ENCODE measurements at regions of chr3 and their contacts with region 1.

Region 1: GRCh38 chr3:15205934-15206661 is at the start of gene CAPN7:
- DNase-seq: peak; percentile 87 to 97 (median 93)
- H3K4me3 ChIP-seq: peak within 1 kb of the TSS; percentile 71 to 100 (median 95)
- H3K27ac ChIP-seq: peak within 1 kb of the TSS; percentile 61 to 97 (median 91)
- H3K27me3 ChIP-seq: no peaks in the 10 kb centered on the region
- CTCF ChIP-seq: peak in 47 of 56 donors; percentile 10 to 61 (median 42)
- total RNA-seq, gene CAPN7: 33.3 to 71.8 (median 46.0) TPM

Region 2: DNA sequence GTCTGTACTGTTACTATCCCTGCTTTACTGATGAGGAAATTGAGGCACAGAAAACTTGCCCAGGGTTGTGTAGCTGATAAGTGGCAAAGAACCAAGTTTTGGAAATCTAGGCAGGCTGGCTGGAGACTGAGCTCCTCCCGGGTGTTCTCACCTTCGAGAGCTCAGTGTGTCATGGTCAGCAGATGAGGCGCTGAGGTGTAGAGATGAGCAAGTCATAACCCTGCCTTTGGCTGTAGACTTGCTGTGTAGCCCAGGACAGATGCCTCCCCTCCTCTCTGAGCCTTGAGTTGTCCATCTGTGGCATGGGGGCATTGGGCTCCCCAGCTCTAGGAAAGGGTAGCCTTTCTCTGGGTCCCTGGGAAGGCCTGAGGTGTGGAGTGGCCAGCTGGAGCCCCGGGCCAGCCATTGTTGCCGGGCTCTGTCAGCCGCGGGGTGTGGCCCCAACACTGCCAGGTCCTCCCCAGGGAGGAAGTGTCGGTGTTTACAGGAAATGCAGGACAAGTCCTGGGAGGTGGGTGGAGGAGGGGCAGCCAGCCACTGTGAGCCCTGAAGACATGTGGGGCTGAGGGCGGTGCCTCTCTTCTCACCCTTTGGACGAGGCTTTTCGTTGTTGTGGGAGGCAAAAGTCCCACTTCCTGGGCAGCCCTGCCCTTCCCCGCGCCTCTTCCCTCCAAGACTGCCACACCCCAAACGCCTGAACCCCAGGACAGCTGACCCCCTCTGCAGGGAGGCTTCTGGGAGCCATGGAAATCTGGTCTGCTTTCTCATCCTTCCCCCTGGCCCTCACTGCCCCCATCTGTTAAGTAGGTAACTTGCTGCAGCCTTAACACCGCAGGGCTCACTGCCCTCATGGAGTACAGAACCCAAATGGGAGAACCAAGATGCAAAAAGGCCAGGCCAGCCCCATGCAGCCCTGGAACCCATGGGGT is 358.2 kb before region 1 on chr3:
- intact Hi-C with region 1: no loop called
- DNase-seq: no peak
- H3K4me3 ChIP-seq: no peak overlapping the region
- H3K27ac ChIP-seq: peak overlapping the region in 1 of 59 donors; percentile 5
- H3K27me3 ChIP-seq: peaks cover 0 to 25% (median 0%) of the 10 kb centered on the region in 45 donors
- CTCF ChIP-seq: no peak

Region 3: GRCh38 chr3:15098503-15099363 is 107.4 kb before region 1 on chr3 and contains the start of gene RBSN:
- intact Hi-C with region 1: loop called in 1 of 2 experiments (anchors 5 kb)
- DNase-seq: peak; percentile 92 to 97 (median 96)
- H3K4me3 ChIP-seq: peak within 1 kb of the TSS; percentile 70 to 99 (median 90)
- H3K27ac ChIP-seq: peak within 1 kb of the TSS in 57 of 59 donors; percentile 27 to 95 (median 87)
- H3K27me3 ChIP-seq: no peaks in the 10 kb centered on the region
- CTCF ChIP-seq: peak in 27 of 56 donors; percentile 11 to 52 (median 32)
- total RNA-seq, gene RBSN: 39.4 to 74.3 (median 61.4) TPM

Region 4: DNA sequence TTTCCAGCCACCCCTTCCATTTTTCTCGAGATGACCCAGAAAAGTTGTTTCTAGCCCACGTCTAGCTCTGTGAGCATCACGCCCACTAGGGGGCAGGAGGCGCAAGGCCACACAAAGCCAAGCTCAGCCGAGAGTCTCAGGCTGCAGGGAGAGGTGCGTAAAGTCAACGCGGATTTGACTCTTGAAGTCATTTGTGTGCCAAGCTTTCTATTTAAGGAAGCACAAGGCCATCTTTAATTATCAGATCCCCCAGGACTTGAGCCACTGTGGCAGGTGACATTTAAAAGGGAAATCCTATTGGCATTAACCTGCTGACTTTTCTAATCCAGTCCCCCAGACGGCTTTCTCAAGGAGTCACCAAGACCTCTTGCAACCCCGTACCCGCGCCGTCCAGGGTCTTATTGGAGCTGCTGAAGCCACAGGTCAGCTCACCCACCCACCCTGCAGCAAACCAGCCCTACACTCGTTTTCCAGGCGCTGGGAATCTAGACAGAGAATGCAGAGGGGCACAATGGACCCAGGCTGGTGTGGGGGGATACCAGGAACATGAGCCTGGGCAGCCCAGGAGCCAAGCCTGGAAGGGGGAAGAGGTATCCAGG is 62.0 kb after region 1 on chr3:
- intact Hi-C with region 1: loop called (anchors 2 to 10 kb)
- DNase-seq: peak; percentile 79 to 91 (median 88)
- H3K4me3 ChIP-seq: peak overlapping the region in 6 of 59 donors; percentile 6 to 31 (median 18)
- H3K27ac ChIP-seq: peak overlapping the region in 54 of 59 donors; percentile 1 to 98 (median 93)
- H3K27me3 ChIP-seq: no peaks in the 10 kb centered on the region
- CTCF ChIP-seq: peak; percentile 81 to 98 (median 95)

Region 5: GRCh38 chr3:15377961-15378791 is 172.1 kb after region 1 on chr3:
- intact Hi-C with region 1: loop called in 1 of 2 experiments (anchors 2 kb)
- DNase-seq: peak; percentile 91 to 99 (median 95)
- H3K4me3 ChIP-seq: peak overlapping the region in 41 of 59 donors; percentile 1 to 50 (median 32)
- H3K27ac ChIP-seq: peak overlapping the region in 53 of 59 donors; percentile 3 to 87 (median 64)
- H3K27me3 ChIP-seq: no peaks in the 10 kb centered on the region
- CTCF ChIP-seq: peak; percentile 82 to 99 (median 96)

Region 6: GRCh38 chr3:15557511-15557946 is 351.4 kb after region 1 on chr3:
- intact Hi-C with region 1: loop called (anchors 2 to 10 kb)
- DNase-seq: peak in 1 of 10 donors; percentile 11
- H3K4me3 ChIP-seq: no peak overlapping the region
- H3K27ac ChIP-seq: peak overlapping the region in 2 of 59 donors; percentile 4 to 10
- H3K27me3 ChIP-seq: no peaks in the 10 kb centered on the region
- CTCF ChIP-seq: peak; percentile 26 to 77 (median 61)

Region 7: GRCh38 chr3:16264708-16265454 is 1058.8 kb after region 1 on chr3 and contains the starts of genes DPH3 and OXNAD1:
- intact Hi-C with region 1: loop called in 1 of 2 experiments (anchors 10 kb)
- DNase-seq: peak; percentile 98 to 100 (median 99)
- H3K4me3 ChIP-seq: peak within 1 kb of the TSS; percentile 65 to 100 (median 89)
- H3K27ac ChIP-seq: peak within 1 kb of the TSS in 58 of 59 donors; percentile 34 to 92 (median 82)
- H3K27me3 ChIP-seq: no peaks in the 10 kb centered on the region
- CTCF ChIP-seq: peak in 37 of 56 donors; percentile 6 to 65 (median 34)
- total RNA-seq, gene DPH3: 12.7 to 30.0 (median 19.6) TPM
- total RNA-seq, gene OXNAD1: 16.6 to 37.5 (median 26.2) TPM